ENCODE measurements at regions of chr3 and their contacts with region 1.

Region 1: DNA sequence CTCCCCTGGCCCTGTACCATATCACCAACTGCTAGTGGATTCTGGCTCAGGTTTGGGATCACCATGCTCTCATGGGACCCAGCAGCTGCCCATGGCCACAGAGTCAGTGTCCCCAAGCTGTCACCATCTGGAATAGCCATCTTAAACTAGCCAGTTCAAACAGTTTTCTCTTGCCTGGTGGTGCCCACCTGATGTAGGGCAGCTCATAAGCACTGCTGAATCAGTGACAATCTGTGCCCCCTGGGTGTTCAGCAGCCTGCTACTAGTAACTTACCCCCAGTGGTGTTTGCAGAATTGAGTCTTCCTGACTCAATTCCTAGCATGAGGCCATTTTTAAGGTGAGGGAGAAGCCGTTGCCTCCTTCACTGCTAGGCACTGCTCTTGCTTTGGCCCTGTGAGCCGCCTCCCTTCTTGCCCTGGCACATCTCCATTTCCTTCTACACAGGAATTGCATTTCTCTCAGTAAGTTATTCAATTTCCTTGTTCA is 7.9 kb downstream of the RPSA start:
- DNase-seq: no peak
- H3K4me3 ChIP-seq: no peak overlapping the region
- H3K27ac ChIP-seq: no peak overlapping the region
- H3K4me1 ChIP-seq: no peaks in the 10 kb centered on the region
- H3K27me3 ChIP-seq: no peaks in the 10 kb centered on the region
- CTCF ChIP-seq: no peak
- EP300 ChIP-seq: no peak
- POLR2A ChIP-seq: no peak

Region 2: GRCh38 chr3:39499651-39500240 is 85.3 kb after region 1 on chr3:
- intact Hi-C with region 1: loop called in 1 of 4 experiments (anchors 10 kb)
- DNase-seq: no peak
- H3K4me3 ChIP-seq: no peak overlapping the region
- H3K27ac ChIP-seq: no peak overlapping the region
- H3K4me1 ChIP-seq: no peaks in the 10 kb centered on the region
- H3K27me3 ChIP-seq: no peaks in the 10 kb centered on the region
- CTCF ChIP-seq: no peak
- EP300 ChIP-seq: no peak
- POLR2A ChIP-seq: no peak